MCF 10A (cell line): ENCODE measurements at regions of chr5 and their contacts with region 1.

Region 1: DNA sequence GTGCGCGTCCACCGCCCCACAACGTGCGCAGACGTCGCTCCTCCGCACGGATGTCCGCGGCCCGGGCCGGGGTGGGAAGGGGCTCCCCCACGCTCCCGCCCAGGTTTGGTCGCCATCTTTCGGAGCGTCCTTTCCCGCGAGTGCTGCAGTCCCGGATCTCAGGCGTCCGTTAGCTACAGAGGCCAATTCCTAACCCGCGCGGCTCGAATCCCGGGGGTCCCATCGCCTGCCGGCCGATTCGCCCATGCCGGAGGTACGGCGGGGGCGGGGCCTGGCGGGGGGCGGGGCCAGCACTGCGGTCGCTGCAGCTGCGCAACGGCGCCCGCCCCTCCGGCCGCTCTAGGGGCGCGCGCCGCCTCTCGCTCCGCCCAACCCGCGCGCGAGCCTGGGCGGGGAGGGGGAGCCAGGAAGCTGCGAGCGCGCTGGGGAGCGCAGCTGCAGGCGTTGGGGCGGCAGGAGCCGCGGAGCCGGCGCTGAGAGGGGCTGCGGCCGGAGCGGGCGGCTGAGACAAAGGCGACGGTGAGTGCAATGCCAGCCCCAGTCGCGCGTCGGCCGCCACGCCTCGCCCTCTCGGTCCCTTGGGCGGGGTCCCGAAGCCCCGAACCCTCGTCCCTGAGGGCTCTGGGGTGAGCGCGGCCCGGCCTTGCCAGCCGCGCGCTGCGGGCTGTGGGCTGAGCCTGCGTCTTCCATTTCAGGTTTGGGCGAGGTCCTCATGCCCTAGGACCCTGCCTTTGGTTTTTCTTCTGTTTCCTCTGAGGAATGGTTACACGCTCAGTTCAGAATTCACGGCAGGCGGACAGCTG is at the start of gene CDC42SE2:
- DNase-seq: peak; percentile 93
- H3K4me3 Mint-ChIP-seq: peak within 1 kb of the TSS; percentile 92
- H3K27ac Mint-ChIP-seq: peak within 1 kb of the TSS; percentile 89
- H3K4me1 Mint-ChIP-seq: peaks cover 31% of the 10 kb centered on the region
- H3K27me3 Mint-ChIP-seq: no peaks in the 10 kb centered on the region
- CTCF ChIP-seq: no peak
- total RNA-seq, gene CDC42SE2: 71.0 and 96.4 TPM in 2 replicates

Region 2: GRCh38 chr5:130795037-130795436 is 468.8 kb before region 1 on chr5:
- CTCF ChIA-PET with region 1: no interaction called
- POLR2A ChIA-PET with region 1: no interaction called
- intact Hi-C with region 1: no loop called
- DNase-seq: peak; percentile 53
- H3K4me3 Mint-ChIP-seq: no peak overlapping the region
- H3K27ac Mint-ChIP-seq: peak overlapping the region; percentile 14
- H3K4me1 Mint-ChIP-seq: peaks cover 17% of the 10 kb centered on the region
- H3K27me3 Mint-ChIP-seq: no peaks in the 10 kb centered on the region
- CTCF ChIP-seq: no peak

Region 3: DNA sequence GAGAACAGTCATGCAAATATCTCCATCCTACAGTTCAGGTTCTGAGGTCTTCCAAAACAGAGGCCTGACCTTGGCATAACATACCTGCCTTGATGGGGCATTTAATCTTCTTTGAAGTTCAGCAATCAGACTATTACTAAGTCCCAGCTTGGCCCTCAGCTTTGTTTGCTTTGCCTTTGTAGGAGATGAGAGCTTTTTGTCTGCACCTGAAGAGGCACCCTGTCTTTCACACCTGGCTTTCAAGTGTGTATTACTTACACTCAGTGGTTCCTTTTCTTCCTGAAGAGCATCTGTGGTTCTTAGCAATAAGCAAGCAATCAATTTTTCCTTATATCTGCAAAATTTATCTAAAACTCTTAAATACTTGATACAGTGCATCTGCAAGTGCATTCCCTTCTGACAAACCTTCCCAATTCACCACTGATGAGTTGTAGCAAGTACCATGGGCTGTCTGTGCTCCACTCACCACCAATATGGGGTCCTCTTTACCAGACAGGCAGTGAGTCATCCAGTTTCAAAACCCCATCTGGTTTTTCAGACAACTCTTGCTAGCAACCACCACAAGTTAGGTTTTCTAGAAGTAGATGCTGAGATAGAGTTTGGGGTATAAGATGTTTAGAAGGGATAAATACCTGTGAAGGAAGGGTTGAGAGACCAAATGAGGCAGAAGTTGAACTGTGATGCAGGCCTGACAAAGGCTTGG is 199.0 kb before region 1 on chr5:
- CTCF ChIA-PET with region 1: no interaction called
- POLR2A ChIA-PET with region 1: no interaction called
- intact Hi-C with region 1: no loop called
- DNase-seq: no peak
- H3K4me3 Mint-ChIP-seq: no peak overlapping the region
- H3K27ac Mint-ChIP-seq: no peak overlapping the region
- H3K4me1 Mint-ChIP-seq: peaks cover 9% of the 10 kb centered on the region
- H3K27me3 Mint-ChIP-seq: no peaks in the 10 kb centered on the region
- CTCF ChIP-seq: no peak

Region 4: DNA sequence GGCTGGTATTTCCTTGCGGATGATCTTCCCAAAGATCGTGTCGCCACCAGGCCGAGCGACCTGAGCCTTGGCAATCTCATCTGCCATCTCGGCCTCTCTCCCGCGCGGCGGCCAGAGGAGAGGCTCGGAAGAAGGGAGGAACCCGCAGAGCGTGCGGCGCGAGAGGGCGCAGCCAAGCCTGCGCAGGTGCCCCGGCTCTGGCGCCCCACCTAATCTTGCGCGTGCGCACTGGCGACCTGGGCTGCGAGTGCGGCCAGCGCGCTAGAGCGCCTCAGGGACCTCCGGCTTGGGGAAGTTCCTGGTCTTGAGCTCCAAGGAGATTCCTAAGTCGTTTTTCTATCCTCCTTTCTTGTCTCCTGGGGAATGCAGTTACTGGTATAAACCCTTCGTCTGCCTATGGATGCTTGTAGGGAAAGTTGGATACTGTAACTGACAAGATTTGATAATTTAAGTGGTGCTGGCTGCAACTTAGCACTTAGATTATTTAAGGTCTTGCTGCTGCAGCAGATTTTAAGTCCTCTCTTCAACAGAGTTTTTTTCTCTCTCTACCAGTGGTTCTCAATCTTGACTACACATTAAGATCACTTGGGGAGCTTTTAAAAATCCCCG is 98.6 kb before region 1 on chr5 and contains the start of gene HINT1:
- CTCF ChIA-PET with region 1: interaction called, 7 read pairs
- POLR2A ChIA-PET with region 1: interaction called, 392 read pairs
- intact Hi-C with region 1: loop called (anchors 1 kb)
- DNase-seq: peak; percentile 98
- H3K4me3 Mint-ChIP-seq: peak within 1 kb of the TSS; percentile 76
- H3K27ac Mint-ChIP-seq: peak within 1 kb of the TSS; percentile 65
- H3K4me1 Mint-ChIP-seq: peaks cover 10% of the 10 kb centered on the region
- H3K27me3 Mint-ChIP-seq: no peaks in the 10 kb centered on the region
- CTCF ChIP-seq: peak; percentile 14
- total RNA-seq, gene HINT1: 444 and 575 TPM in 2 replicates

Region 5: DNA sequence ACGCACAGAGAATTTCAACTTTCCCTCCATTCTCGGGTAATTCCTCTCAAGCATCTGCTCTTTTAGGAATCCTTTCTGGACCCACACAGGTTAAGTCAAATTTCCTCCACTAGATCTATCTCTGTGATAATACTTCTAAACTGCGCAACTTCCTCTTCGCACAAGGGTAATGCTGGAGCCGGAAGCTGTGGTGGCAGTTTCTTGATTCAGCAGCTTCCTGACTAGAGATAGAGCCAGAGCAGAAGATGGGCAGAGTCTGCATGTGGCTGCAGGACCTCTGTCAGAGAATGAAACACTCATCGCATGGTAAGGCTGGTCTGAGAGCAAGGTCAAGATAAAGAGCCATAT is 11.1 kb before region 1 on chr5:
- CTCF ChIA-PET with region 1: interaction called, 7 read pairs
- POLR2A ChIA-PET with region 1: interaction called, 11 read pairs
- intact Hi-C with region 1: no loop called
- DNase-seq: no peak
- H3K4me3 Mint-ChIP-seq: no peak overlapping the region
- H3K27ac Mint-ChIP-seq: no peak overlapping the region
- H3K4me1 Mint-ChIP-seq: peaks cover under 1% of the 10 kb centered on the region
- H3K27me3 Mint-ChIP-seq: no peaks in the 10 kb centered on the region
- CTCF ChIP-seq: no peak

Region 6: DNA sequence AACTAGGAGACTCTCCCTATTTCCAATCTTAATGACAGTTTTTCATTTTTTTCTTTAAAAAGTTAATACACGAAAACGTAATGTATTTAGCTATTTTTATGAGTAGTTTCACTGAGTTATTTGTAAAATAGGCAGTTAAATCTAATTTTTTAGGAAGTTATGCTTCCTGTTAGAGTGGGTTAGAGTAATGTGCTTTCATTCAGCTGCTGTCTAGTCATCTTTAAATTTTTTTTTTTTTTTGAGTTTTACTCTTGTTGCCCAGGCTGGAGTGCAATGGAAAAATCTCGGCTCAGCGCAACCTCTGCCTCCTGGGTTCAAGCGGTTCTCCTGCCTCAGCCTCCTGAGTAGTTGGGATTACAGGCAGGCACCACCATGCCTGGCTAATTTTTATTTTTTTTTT is 34.0 kb after region 1 on chr5:
- CTCF ChIA-PET with region 1: interaction called, 9 read pairs
- POLR2A ChIA-PET with region 1: interaction called, 110 read pairs
- intact Hi-C with region 1: loop called (anchors 1 kb)
- DNase-seq: no peak
- H3K4me3 Mint-ChIP-seq: no peak overlapping the region
- H3K27ac Mint-ChIP-seq: no peak overlapping the region
- H3K4me1 Mint-ChIP-seq: peaks cover 36% of the 10 kb centered on the region
- H3K27me3 Mint-ChIP-seq: no peaks in the 10 kb centered on the region
- CTCF ChIP-seq: no peak

Region 7: GRCh38 chr5:131328536-131329285 is 64.9 kb after region 1 on chr5:
- CTCF ChIA-PET with region 1: no interaction called
- POLR2A ChIA-PET with region 1: interaction called, 57 read pairs
- intact Hi-C with region 1: no loop called
- DNase-seq: peak; percentile 73
- H3K4me3 Mint-ChIP-seq: no peak overlapping the region
- H3K27ac Mint-ChIP-seq: peak overlapping the region; percentile 7
- H3K4me1 Mint-ChIP-seq: peaks cover 44% of the 10 kb centered on the region
- H3K27me3 Mint-ChIP-seq: no peaks in the 10 kb centered on the region
- CTCF ChIP-seq: no peak

Region 8: DNA sequence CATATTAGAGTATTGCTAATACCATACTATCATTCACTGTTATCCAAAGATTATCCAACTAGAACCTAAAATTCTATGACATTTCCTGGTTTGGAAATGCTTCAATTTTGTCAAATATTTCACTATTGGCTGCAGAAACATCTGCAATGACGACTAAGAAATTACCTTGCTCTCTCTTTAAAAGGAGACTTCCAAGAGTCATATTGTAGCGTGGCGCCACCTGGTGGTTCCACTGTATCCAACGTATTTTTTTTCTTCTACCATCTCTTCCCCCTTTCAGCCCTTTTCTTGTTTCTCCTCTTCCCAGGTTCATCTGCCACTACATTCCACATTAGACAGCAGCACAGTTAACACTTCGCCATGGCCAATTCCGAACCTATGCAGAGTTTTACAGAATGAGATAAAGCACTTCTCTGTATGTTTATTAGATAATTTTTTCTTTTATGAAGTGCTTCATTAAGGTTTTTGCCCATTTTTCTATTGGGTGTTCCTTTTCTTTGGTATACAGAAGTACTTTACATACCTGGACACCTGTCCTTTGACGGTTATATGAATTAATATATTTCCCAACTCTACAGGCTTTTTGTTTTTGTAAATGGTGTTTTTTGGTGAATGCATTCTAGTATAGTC is 153.5 kb after region 1 on chr5:
- CTCF ChIA-PET with region 1: interaction called, 7 read pairs
- POLR2A ChIA-PET with region 1: interaction called, 11 read pairs
- intact Hi-C with region 1: loop called (anchors 1 kb)
- DNase-seq: peak; percentile 85
- H3K4me3 Mint-ChIP-seq: no peak overlapping the region
- H3K27ac Mint-ChIP-seq: no peak overlapping the region
- H3K4me1 Mint-ChIP-seq: peaks cover 5% of the 10 kb centered on the region
- H3K27me3 Mint-ChIP-seq: no peaks in the 10 kb centered on the region
- CTCF ChIP-seq: peak; percentile 89

Region 9: DNA sequence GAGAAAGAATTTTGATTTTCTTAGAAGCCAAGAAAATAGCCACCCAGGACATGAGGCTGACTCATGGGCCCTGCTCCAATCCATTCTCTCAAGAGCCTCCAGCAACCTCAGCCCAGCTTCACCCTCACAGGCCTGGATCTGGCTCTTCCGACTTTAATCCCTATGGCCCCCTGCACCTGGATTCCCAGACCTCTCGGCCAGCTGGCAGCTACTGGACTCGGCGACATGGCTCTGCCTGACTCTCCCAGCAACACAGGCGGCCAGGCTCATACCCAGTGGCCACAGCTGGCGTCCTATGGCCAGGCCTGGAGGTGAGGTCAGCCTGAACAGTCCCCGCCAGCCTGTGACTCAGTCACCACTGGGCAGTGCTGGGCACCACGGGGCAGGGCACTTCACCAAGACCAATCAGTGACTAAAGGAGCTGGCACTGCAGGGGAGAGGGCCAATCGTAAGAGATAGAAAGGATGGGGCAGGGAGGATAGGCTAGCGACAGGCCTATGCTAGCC is 987.4 kb after region 1 on chr5:
- CTCF ChIA-PET with region 1: no interaction called
- POLR2A ChIA-PET with region 1: no interaction called
- intact Hi-C with region 1: no loop called
- DNase-seq: no peak
- H3K4me3 Mint-ChIP-seq: no peak overlapping the region
- H3K27ac Mint-ChIP-seq: peak overlapping the region; percentile 70
- H3K4me1 Mint-ChIP-seq: peaks cover 26% of the 10 kb centered on the region
- H3K27me3 Mint-ChIP-seq: no peaks in the 10 kb centered on the region
- CTCF ChIP-seq: no peak